ENCODE measurements at regions of chr6 and their contacts with region 1.

Region 1: DNA sequence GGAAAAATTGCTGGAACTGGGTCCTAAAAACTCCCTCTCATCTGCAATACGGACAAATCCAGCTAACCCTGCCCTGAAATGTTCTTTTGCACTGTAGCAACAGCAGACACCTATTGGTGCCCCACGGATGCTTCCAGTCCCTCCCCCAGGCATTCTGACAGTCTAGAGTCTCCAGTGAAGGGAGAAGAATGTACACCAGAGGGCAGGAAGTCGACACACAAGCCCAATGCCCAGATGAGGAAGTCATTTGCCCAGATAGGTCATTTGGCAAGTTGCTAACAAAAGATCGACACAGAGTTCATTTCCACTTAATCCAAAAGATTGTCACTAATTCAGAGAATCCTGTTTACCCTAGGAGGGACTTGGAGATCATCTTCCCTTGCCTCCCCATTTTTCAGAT is 293.0 kb upstream of the PRDM1 start:
- H3K4me3 Mint-ChIP-seq: no peak overlapping the region
- H3K27ac Mint-ChIP-seq: peak overlapping the region; percentile 51
- H3K4me1 Mint-ChIP-seq: peaks cover 57% of the 10 kb centered on the region
- H3K27me3 Mint-ChIP-seq: no peaks in the 10 kb centered on the region

Region 2: GRCh38 chr6:105832361-105832761 is 39.2 kb after region 1 on chr6:
- intact Hi-C with region 1: loop called (anchors 5 kb)
- H3K4me3 Mint-ChIP-seq: peak overlapping the region; percentile 44
- H3K27ac Mint-ChIP-seq: peak overlapping the region; percentile 88
- H3K4me1 Mint-ChIP-seq: peaks cover 36% of the 10 kb centered on the region
- H3K27me3 Mint-ChIP-seq: no peaks in the 10 kb centered on the region

Region 3: GRCh38 chr6:105872246-105872645 is 79.1 kb after region 1 on chr6:
- intact Hi-C with region 1: loop called (anchors 5 kb)
- H3K4me3 Mint-ChIP-seq: no peak overlapping the region
- H3K27ac Mint-ChIP-seq: peak overlapping the region; percentile 72
- H3K4me1 Mint-ChIP-seq: peaks cover 77% of the 10 kb centered on the region
- H3K27me3 Mint-ChIP-seq: peaks cover 3% of the 10 kb centered on the region

Region 4: DNA sequence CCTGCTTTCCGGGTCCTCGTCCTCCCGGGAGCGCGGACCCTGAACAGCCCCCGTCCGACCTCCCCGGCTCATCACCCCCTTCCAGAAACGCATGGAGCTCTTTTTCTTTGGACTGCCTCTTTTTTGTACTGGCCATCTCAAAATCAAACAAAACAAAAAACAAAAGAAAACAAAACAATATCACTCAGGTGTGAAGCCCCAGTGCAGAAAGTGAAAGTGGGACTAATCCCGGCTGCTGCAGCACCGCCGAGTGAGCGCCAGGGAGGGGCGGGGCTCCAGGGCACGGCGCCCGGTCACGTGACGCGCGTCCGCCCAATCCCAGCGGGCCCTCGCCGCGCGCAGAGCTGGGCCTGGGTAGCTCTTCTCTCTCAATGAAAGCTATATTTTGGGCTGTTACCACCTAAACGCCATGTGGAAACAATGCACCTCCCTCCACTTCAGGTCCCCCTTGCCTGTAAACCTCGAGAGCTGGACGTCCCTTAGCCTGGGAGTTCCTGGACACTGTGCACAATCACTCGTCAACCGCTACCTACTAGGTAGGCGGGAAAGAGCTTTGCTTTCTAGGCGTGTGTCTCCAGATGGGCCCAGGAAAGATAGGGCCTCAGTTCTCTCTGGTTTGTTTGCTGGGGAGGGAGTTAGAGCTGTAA is 199.3 kb after region 1 on chr6:
- intact Hi-C with region 1: loop called (anchors 2 kb)
- H3K4me3 Mint-ChIP-seq: peak overlapping the region; percentile 93
- H3K27ac Mint-ChIP-seq: peak overlapping the region; percentile 93
- H3K4me1 Mint-ChIP-seq: peaks cover 51% of the 10 kb centered on the region
- H3K27me3 Mint-ChIP-seq: peaks cover 15% of the 10 kb centered on the region

Region 5: GRCh38 chr6:106223300-106223930 is 430.3 kb after region 1 on chr6:
- intact Hi-C with region 1: loop called (anchors 5 kb)
- H3K4me3 Mint-ChIP-seq: no peak overlapping the region
- H3K27ac Mint-ChIP-seq: no peak overlapping the region
- H3K4me1 Mint-ChIP-seq: peaks cover 24% of the 10 kb centered on the region
- H3K27me3 Mint-ChIP-seq: no peaks in the 10 kb centered on the region